HEK293T (cell line): ENCODE measurements at regions of chr17 and their contacts with region 1.

Region 1: DNA sequence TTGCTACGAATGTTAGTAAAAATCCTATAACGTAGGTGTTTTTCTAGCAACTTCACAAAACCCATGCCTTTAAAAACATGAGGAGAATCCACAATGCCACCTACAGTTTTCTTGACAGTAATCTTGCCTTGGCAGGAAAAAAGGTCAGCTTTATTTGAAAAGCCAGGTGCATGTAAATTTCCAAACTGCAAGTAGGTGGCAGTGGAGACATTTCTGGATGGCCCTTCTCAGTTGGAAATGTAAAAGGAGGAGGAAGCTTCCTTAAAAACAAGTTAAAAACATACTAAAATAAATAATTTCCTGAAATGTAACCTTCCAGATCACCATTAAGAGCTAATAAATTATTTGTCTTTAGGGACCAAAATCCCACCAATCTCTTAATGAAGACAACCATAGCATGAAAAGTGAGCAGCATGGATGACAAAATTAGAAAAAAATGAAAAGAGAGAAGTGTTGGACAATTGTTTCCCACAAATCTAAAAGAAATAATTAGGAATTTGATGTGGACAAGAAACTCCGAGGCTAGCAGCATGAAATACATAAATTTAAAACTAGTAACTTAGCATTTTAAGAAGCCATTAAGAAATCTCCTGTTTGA is 152.2 kb downstream of the SNX11 start:
- DNase-seq: no peak

Region 2: DNA sequence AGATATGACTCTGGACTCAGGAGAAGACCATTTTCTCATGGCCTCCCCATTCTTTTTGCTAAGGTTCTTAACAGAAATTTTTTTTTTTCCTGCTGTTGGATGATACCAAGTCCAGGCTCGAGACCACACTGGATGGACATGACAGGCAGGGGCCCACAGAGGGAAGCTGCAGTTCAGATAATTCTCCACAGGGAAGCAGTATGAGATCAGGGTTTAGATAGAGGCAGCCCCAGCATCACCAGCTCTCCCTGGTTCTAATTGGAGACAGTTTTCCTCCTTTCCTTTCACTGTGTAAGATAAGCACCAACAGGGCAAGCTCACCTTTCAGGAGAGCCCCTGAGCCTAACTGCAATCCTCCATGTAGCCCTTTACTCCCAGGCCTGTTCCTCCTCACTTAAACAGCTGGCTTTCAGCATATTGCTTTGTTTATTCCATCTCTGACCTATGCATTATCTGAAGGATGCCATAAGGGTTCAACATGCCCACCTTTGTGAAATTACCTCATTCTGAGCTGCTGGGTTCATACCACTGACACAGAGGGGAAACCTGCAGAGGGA is 44.1 kb before region 1 on chr17:
- CTCF ChIA-PET with region 1: interaction called, 17 read pairs
- POLR2A ChIA-PET with region 1: no interaction called
- DNase-seq: peak; percentile 75

Region 3: GRCh38 chr17:48246612-48247011 is 13.2 kb before region 1 on chr17:
- CTCF ChIA-PET with region 1: interaction called, 13 read pairs
- POLR2A ChIA-PET with region 1: interaction called, 4 read pairs
- DNase-seq: no peak

Region 4: GRCh38 chr17:48270896-48271295 is 11.1 kb after region 1 on chr17:
- CTCF ChIA-PET with region 1: interaction called, 14 read pairs
- POLR2A ChIA-PET with region 1: no interaction called
- DNase-seq: no peak